ENCODE measurements at regions of chr2 and their contacts with region 1.

Region 1: DNA sequence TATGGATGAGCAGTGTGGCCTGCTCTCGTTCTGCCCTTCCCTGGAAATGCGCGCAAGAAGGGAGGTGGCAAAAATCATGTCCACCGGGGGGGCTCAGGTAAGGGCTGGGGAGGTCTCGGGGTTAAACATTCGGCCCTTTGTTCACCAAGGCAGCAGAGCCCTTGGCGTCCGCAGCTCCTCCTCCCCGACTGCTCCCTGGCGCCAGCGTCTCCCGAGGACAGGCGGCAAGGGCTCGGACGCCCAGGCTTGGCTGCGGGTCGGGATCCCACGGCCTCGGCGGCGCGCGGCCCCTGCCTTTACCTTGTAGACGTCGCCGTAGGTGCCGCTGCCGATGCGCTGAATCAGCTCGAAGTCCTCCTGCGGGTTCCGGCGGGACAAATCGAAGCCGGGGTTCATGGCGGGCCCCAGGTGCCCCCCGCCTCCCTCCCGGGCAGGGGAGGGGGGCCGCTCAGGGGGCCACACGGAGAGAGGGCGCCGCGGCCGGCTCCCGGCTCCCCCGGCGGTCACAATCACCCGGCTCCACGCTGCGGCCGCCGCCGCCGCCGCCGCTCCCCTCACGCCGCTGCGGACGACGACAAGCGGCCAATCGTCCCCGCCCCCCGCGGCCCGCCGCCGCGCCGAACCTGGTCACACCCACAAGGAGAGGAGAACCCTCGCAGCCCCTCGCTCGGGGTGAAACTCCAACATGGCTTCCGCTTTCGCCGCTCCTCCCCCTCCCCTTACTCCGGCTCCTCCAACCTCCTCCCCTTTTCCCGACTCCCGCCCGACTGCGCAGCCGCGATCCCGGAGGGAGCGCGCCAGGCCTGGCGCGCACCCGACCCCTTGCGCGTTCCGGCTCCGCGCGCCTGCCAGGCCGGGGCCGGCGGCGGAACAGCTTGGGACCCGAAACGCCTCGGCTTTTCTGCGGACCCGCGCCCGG is at the start of gene MAP4K3:
- DNase-seq: peak; percentile 96
- ATAC-seq: peak; percentile 73
- H3K4me3 ChIP-seq: peak within 1 kb of the TSS; percentile 92
- H3K27ac ChIP-seq: peak within 1 kb of the TSS; percentile 87
- H3K4me1 ChIP-seq: peaks cover 61% of the 10 kb centered on the region
- H3K27me3 ChIP-seq: no peaks in the 10 kb centered on the region
- CTCF ChIP-seq: no peak
- total RNA-seq, gene MAP4K3: 81.1 and 97.4 TPM in 2 replicates

Region 2: DNA sequence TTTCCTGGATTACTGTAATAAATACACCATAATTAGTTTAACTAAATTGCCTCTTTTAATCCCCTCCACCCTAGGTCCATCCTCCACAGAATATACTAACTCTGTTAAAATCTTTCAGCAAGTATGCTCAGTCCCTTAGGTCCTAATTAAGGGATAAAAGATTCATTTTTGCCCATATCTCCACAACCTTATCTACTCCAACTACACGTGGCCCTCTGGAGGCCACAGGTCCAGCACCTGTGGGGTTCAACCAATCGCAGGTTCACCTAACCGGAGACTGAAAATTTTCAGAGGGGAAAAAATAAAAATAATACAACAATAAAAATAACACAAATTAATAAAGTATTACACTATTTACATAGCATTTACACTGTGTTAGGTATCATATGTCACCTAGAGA is 86.2 kb before region 1 on chr2:
- CTCF ChIA-PET with region 1: no interaction called
- POLR2A ChIA-PET with region 1: no interaction called
- intact Hi-C with region 1: no loop called
- DNase-seq: no peak
- ATAC-seq: no peak
- H3K4me3 ChIP-seq: no peak overlapping the region
- H3K27ac ChIP-seq: no peak overlapping the region
- H3K4me1 ChIP-seq: no peaks in the 10 kb centered on the region
- H3K27me3 ChIP-seq: no peaks in the 10 kb centered on the region
- CTCF ChIP-seq: no peak

Region 3: DNA sequence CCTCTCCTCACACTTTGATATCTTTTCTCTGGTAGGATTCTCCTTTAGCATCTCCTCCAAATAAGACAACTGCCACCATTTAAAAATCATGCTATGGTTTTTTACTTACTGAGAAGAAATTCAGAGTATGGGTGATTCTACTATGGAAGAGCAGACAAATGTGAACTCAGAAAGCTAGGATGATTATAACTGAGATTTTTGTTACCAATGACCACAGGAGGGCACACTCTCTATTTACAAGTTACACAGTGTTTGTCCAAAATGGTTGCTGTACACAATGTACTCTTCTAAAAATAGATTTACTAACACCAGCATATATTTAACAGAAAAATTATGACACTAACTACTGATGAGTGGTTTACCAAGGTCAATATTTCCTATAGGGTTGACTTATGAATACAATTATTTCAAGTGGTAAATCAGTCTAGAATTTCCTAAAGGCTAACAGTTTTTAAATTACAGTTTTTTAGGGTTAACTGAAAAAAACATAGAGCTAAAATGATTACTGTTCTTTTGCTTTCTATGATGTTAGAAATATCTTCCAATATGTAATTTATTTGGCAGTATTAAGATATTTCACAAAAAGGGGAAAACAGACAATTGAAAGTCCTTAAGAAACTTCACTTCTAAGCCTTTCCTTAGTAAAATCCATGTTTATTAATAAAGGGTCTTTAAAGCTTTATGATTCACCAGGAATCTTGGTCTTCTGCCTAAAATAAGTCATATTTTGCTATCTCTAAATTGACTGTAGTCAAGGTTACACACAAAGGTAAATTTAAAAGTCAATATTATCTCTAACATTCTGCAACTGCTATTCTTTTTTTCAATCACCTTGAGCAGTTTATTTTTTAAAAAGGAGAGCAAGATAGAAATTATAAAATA is 57.0 kb before region 1 on chr2:
- CTCF ChIA-PET with region 1: no interaction called
- POLR2A ChIA-PET with region 1: no interaction called
- intact Hi-C with region 1: loop called (anchors 2 kb)
- DNase-seq: peak; percentile 67
- ATAC-seq: peak; percentile 70
- H3K4me3 ChIP-seq: no peak overlapping the region
- H3K27ac ChIP-seq: peak overlapping the region; percentile 48
- H3K4me1 ChIP-seq: peaks cover 26% of the 10 kb centered on the region
- H3K27me3 ChIP-seq: no peaks in the 10 kb centered on the region
- CTCF ChIP-seq: peak; percentile 84

Region 4: DNA sequence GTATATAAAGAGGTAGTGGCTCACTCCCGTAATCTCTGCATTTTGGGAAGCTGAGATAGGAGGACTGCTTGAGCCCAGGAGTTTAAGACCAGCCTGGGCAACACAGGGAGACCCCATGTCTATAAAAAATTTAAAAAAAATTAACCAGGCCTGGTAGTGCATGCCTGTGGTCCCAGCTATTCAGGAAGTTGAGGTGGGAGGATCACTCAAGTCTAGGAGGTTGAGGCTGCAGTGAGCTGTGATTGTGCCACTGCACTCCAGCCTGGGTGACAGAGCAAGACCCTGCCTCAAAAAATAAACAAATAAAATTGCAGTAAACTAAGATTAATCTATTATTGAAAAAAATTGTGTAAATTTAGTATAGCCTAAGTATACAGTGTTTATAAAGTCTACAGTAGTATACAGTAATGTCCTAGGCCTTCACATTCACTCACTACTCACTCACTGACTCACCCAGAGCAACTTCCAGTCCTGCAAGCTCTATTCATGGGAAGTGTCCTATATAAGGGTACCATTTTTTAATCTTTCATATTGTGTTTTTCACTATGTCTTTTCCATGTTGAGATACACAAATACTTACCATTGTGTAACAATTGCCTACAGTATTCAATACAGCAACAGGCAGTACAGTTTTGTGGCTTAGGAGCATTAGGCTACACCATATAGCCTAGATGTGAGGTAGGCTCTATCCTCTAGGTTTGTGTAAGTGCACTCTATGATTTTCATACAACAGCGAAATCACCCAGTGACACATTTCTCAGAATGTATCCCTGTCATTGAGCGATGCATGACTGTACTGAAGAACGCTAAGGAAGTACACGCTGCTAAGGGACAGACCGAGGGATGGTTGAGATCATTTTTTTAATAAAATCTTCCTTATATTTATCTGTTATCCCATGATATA is 10.7 kb after region 1 on chr2:
- CTCF ChIA-PET with region 1: interaction called, 3 read pairs
- POLR2A ChIA-PET with region 1: no interaction called
- intact Hi-C with region 1: loop called (anchors 1 kb)
- DNase-seq: peak; percentile 61
- ATAC-seq: peak; percentile 83
- H3K4me3 ChIP-seq: peak overlapping the region; percentile 57
- H3K27ac ChIP-seq: peak overlapping the region; percentile 99
- H3K4me1 ChIP-seq: peaks cover 41% of the 10 kb centered on the region
- H3K27me3 ChIP-seq: no peaks in the 10 kb centered on the region
- CTCF ChIP-seq: no peak

Region 5: GRCh38 chr2:39492095-39492590 is 55.3 kb after region 1 on chr2:
- CTCF ChIA-PET with region 1: no interaction called
- POLR2A ChIA-PET with region 1: interaction called, 13 read pairs
- intact Hi-C with region 1: loop called (anchors 1 kb)
- DNase-seq: peak; percentile 97
- ATAC-seq: peak; percentile 76
- H3K4me3 ChIP-seq: peak overlapping the region; percentile 26; the same call in 1 of the 2 replicates
- H3K27ac ChIP-seq: peak overlapping the region; percentile 95
- H3K4me1 ChIP-seq: peaks cover 83% of the 10 kb centered on the region
- H3K27me3 ChIP-seq: no peaks in the 10 kb centered on the region
- CTCF ChIP-seq: no peak

Region 6: DNA sequence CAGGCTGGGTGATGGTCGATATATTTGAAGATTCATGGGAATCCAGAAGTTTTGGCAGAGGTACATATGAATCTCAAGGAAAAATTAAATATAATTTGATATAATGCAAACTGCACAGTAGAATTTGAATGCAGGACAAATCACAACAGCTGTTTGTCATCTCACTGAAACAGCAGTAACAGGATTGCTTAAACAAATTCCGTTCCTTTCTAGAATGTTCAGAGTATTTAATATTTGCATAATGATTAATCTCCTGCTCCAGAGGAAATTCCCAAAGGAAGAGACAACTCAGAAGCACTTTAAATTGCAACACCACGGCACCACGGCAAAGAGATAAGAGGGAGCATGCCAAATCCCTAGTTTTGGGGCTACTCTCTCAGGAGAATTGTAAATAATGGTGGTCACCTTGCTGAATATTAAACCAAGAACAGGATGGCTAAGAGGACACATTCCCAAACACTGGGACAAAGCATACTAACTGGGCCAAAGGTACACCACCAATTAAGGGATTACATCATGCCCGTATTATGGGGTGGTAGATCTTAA is 68.0 kb after region 1 on chr2:
- CTCF ChIA-PET with region 1: no interaction called
- POLR2A ChIA-PET with region 1: no interaction called
- intact Hi-C with region 1: loop called (anchors 5 kb)
- DNase-seq: peak; percentile 75
- ATAC-seq: peak; percentile 59
- H3K4me3 ChIP-seq: no peak overlapping the region
- H3K27ac ChIP-seq: peak overlapping the region; percentile 98
- H3K4me1 ChIP-seq: peaks cover 42% of the 10 kb centered on the region
- H3K27me3 ChIP-seq: no peaks in the 10 kb centered on the region
- CTCF ChIP-seq: no peak

Region 7: GRCh38 chr2:39642051-39642742 is 205.3 kb after region 1 on chr2:
- CTCF ChIA-PET with region 1: no interaction called
- POLR2A ChIA-PET with region 1: no interaction called
- intact Hi-C with region 1: loop called (anchors 10 kb)
- DNase-seq: peak; percentile 95
- ATAC-seq: peak; percentile 92
- H3K4me3 ChIP-seq: peak overlapping the region; percentile 7; the same call in 1 of the 2 replicates
- H3K27ac ChIP-seq: peak overlapping the region; percentile 72
- H3K4me1 ChIP-seq: peaks cover 59% of the 10 kb centered on the region
- H3K27me3 ChIP-seq: no peaks in the 10 kb centered on the region
- CTCF ChIP-seq: no peak

Region 8: GRCh38 chr2:39708003-39708402 is 271.2 kb after region 1 on chr2:
- CTCF ChIA-PET with region 1: no interaction called
- POLR2A ChIA-PET with region 1: no interaction called
- intact Hi-C with region 1: no loop called
- DNase-seq: no peak
- ATAC-seq: no peak
- H3K4me3 ChIP-seq: no peak overlapping the region
- H3K27ac ChIP-seq: no peak overlapping the region
- H3K4me1 ChIP-seq: no peaks in the 10 kb centered on the region
- H3K27me3 ChIP-seq: no peaks in the 10 kb centered on the region
- CTCF ChIP-seq: no peak

Region 9: DNA sequence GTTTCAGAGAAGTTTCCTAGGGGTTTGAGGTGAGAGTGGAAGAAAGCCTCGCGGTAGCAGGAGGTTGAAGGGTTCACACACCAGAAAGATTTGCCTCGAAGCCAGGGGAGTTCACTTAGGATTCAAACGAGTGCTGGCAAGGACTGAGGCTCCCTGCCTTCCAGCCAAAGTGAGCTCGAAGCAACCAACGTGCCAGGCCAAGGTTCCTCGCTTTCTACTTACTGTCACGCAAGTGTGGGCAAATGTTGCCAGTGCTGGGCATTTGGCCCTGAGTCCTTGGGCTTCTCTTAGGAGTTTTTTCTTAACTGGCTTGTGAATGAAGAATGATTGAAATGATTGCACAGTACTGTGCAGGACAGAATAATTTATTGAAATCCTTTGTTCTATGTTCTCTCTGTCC is 282.5 kb after region 1 on chr2:
- CTCF ChIA-PET with region 1: no interaction called
- POLR2A ChIA-PET with region 1: interaction called, 11 read pairs
- intact Hi-C with region 1: no loop called
- DNase-seq: no peak
- ATAC-seq: no peak
- H3K4me3 ChIP-seq: no peak overlapping the region
- H3K27ac ChIP-seq: no peak overlapping the region
- H3K4me1 ChIP-seq: peaks cover 10% of the 10 kb centered on the region
- H3K27me3 ChIP-seq: no peaks in the 10 kb centered on the region
- CTCF ChIP-seq: no peak